K562 (cell line): ENCODE measurements at regions of chr12 and their contacts with region 1.

Region 1: GRCh38 chr12:56117778-56118687 is at the start of gene ZC3H10:
- DNase-seq: peak; percentile 87 to 100 (median 90)
- ATAC-seq: peak; percentile 88
- H3K4me3 ChIP-seq: peak within 1 kb of the TSS; percentile 59
- H3K27ac ChIP-seq: peak within 1 kb of the TSS; percentile 97
- H3K4me1 ChIP-seq: peaks cover 16 to 17% of the 10 kb centered on the region in 2 experiments
- H3K27me3 ChIP-seq: no peaks in the 10 kb centered on the region
- CTCF ChIP-seq: peak; percentile 70 to 79 (median 71)
- EP300 ChIP-seq: peak; percentile 69
- POLR2A ChIP-seq: peak; percentile 99
- RAD21 ChIP-seq: peak; percentile 14 to 44; a peak in 3 of 4 replicates
- polyA plus RNA-seq, gene ZC3H10: 0.31 to 0.46 TPM

Region 2: GRCh38 chr12:55973598-55974307 is 144.3 kb before region 1 on chr12 and contains the start of gene RAB5B:
- CTCF ChIA-PET with region 1: no interaction called
- POLR2A ChIA-PET with region 1: interaction called, 11 read pairs
- in situ Hi-C with region 1: no loop called
- intact Hi-C with region 1: no loop called
- DNase-seq: peak; percentile 87 to 100 (median 94)
- ATAC-seq: peak; percentile 95
- H3K4me3 ChIP-seq: peak within 1 kb of the TSS; percentile 68
- H3K27ac ChIP-seq: peak within 1 kb of the TSS; percentile 88
- H3K4me1 ChIP-seq: peaks cover 14 to 21% of the 10 kb centered on the region in 2 experiments
- H3K27me3 ChIP-seq: no peaks in the 10 kb centered on the region
- CTCF ChIP-seq: peak in 1 of 3 experiments; percentile 5; a peak in 1 of 6 replicates
- EP300 ChIP-seq: peak; percentile 7; the same call in 1 of the 2 replicates
- POLR2A ChIP-seq: peak; percentile 90
- RAD21 ChIP-seq: no peak
- polyA plus RNA-seq, gene RAB5B: 6.8 to 12.2 TPM

Region 3: DNA sequence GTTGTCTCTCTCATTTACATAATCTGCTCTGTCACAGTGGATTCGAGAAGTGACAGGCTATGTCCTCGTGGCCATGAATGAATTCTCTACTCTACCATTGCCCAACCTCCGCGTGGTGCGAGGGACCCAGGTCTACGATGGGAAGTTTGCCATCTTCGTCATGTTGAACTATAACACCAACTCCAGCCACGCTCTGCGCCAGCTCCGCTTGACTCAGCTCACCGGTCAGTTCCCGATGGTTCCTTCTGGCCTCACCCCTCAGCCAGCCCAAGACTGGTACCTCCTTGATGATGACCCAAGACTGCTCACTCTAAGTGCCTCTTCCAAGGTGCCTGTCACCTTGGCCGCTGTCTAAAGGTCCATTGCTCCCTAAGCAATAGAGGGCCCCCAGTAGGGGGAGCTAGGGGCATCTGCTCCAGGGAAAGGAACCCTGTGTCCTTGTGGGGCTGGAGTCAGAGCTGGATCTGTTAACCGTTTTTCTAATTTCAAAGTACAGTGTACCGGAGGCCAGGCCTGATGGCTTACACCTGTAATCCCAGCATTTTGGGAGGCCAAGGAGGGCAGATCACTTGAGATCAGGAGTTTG is 33.0 kb before region 1 on chr12:
- CTCF ChIA-PET with region 1: no interaction called
- POLR2A ChIA-PET with region 1: interaction called, 8 read pairs
- in situ Hi-C with region 1: no loop called
- intact Hi-C with region 1: loop called (anchors 1 kb)
- DNase-seq: peak; percentile 53 to 82 (median 72)
- ATAC-seq: peak; percentile 81
- H3K4me3 ChIP-seq: no peak overlapping the region
- H3K27ac ChIP-seq: no peak overlapping the region
- H3K4me1 ChIP-seq: peaks cover 38 to 41% of the 10 kb centered on the region in 2 experiments
- H3K27me3 ChIP-seq: no peaks in the 10 kb centered on the region; a peak in 1 of 5 replicates
- CTCF ChIP-seq: peak; percentile 73 to 85 (median 81)
- EP300 ChIP-seq: no peak
- POLR2A ChIP-seq: no peak
- RAD21 ChIP-seq: peak in 1 of 2 experiments; percentile 58; a peak in 3 of 4 replicates

Region 4: GRCh38 chr12:56152318-56153033 is 34.4 kb after region 1 on chr12 and contains the start of gene MYL6B:
- CTCF ChIA-PET with region 1: no interaction called
- POLR2A ChIA-PET with region 1: interaction called, 16 read pairs
- in situ Hi-C with region 1: no loop called
- intact Hi-C with region 1: loop called (anchors 5 kb)
- DNase-seq: peak; percentile 85 to 97 (median 90)
- ATAC-seq: peak; percentile 86
- H3K4me3 ChIP-seq: peak within 1 kb of the TSS; percentile 55
- H3K27ac ChIP-seq: peak within 1 kb of the TSS; percentile 96
- H3K4me1 ChIP-seq: peaks cover 37 to 42% of the 10 kb centered on the region in 2 experiments; a peak in 4 of 5 replicates
- H3K27me3 ChIP-seq: no peaks in the 10 kb centered on the region
- CTCF ChIP-seq: no peak
- EP300 ChIP-seq: peak; percentile 69; the same call in 1 of the 2 replicates
- POLR2A ChIP-seq: peak; percentile 89
- RAD21 ChIP-seq: no peak
- polyA plus RNA-seq, gene MYL6B: 48.2 to 68.6 TPM

Region 5: DNA sequence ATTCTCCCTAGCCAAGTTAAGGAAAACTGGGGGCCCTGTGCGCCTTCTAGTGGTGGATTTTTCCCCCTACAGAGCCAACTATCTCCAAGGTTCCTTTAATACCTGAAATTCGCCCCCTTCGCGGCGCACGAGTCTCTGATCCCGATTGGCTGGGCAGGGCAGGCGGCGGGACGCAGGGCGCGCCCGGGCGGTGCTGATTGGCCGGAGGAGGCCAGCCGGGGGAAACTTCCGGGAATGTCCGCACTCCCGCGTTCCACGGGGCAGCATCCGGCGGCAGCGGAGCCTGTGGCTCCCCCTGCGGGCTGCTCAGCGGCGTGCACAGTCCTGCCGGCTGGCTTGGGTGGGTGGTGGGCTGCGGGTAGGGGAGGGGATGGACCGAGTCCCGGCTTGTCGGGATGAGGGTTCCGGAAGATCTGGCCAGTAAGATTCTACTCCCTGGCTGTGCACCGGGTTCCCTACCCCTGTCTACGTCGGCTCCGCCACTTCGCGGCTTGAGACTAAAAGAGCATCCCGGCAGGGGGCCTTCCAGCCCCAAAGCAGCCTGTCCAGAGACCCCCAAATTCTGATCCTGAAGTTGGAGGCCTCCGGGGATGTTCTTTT is 106.2 kb after region 1 on chr12 and contains the start of gene NABP2:
- CTCF ChIA-PET with region 1: interaction called, 18 read pairs
- POLR2A ChIA-PET with region 1: interaction called, 14 read pairs
- in situ Hi-C with region 1: no loop called
- intact Hi-C with region 1: loop called (anchors 1 kb)
- DNase-seq: peak; percentile 98 to 100 (median 99)
- ATAC-seq: peak; percentile 91
- H3K4me3 ChIP-seq: peak within 1 kb of the TSS; percentile 95
- H3K27ac ChIP-seq: peak within 1 kb of the TSS; percentile 93
- H3K4me1 ChIP-seq: peaks cover 26 to 31% of the 10 kb centered on the region in 2 experiments; a peak in 4 of 5 replicates
- H3K27me3 ChIP-seq: no peaks in the 10 kb centered on the region
- CTCF ChIP-seq: peak; percentile 81 to 96 (median 81)
- EP300 ChIP-seq: 0 out of 2 replicates have a peak, but pooled peaks have one; percentile 29
- POLR2A ChIP-seq: 0 out of 2 replicates have a peak, but pooled peaks have one; percentile 51
- RAD21 ChIP-seq: peak; percentile 77
- polyA plus RNA-seq, gene NABP2: 11.3 to 28.0 TPM

Region 6: DNA sequence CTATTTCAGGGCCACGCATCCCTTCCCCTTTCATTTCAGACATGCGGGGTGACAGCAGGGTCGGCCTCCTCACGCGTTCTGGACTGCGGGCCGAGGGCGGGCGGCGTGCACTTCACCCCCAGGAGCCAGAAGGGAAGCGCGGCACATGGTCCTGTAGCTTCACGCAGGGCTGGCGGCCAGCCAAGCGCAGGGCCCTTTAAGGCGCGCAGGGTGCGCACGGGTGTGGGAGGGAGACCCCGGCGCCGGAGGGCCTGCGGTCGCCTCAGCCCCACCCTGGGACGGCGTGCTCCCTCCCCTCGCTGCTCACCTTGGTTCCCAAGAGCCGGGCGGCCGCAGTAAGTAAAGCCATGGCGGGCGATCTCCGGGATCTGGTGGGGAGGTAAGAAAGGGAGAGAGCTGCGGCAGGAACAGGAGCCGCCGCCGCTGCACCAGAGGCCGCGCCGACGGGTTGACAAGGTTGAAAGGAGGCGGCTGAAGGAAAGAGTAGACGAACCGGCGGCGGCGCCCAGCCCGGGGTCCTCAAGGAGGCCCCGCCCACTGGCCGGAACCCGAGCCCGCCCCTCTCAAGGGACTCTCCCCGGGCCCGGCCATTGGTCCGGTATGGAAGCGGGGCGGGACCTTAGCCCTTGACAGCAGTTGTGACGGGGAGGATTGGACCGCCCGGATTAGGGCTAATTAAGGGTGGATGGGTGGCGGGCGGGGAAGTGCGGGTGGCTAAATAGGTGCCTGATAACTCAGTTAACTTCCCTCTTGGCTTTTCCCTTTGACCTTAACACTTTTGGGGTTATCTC is 182.0 kb after region 1 on chr12 and contains the start of gene CS:
- CTCF ChIA-PET with region 1: no interaction called
- POLR2A ChIA-PET with region 1: no interaction called
- in situ Hi-C with region 1: no loop called
- intact Hi-C with region 1: loop called (anchors 2 kb)
- DNase-seq: peak; percentile 96 to 99 (median 97)
- ATAC-seq: peak; percentile 94
- H3K4me3 ChIP-seq: peak within 1 kb of the TSS; percentile 64
- H3K27ac ChIP-seq: peak within 1 kb of the TSS; percentile 98
- H3K4me1 ChIP-seq: peaks cover 22 to 42% of the 10 kb centered on the region in 2 experiments
- H3K27me3 ChIP-seq: no peaks in the 10 kb centered on the region
- CTCF ChIP-seq: no peak
- EP300 ChIP-seq: peak; percentile 16; the same call in 1 of the 2 replicates
- POLR2A ChIP-seq: peak; percentile 95
- RAD21 ChIP-seq: no peak
- polyA plus RNA-seq, gene CS: 99.9 to 239 TPM